Lower lobe of right lung (tissue), 2 donors: ENCODE measurements at regions of chr18 and their contacts with region 1.

Region 1: GRCh38 chr18:34364699-34365098 is 140.0 kb upstream of the NOL4 start:
- DNase-seq: no peak
- ATAC-seq: no peak
- H3K4me3 ChIP-seq: no peak overlapping the region
- H3K27ac ChIP-seq: no peak overlapping the region
- H3K4me1 ChIP-seq: no peaks in the 10 kb centered on the region
- H3K27me3 ChIP-seq: no peaks in the 10 kb centered on the region
- CTCF ChIP-seq: no peak

Region 2: DNA sequence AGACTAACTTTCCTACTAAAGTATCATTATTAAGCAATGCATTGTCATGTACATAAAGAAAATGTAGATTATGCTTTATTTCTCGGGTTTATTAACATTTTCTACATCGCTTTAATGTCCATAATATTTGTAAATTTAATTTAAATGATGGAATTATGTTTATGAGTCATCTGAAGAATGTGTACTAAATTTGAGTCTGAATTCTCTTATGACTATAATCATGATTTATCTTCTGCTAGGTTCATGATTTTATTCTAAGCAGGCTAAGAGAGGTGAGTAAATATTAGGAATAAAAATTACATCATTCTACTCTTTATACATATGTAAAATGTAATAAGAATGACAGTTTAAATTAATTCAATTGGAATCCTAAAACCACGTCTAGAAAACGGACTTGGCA is 66.3 kb after region 1 on chr18:
- intact Hi-C with region 1: loop called (anchors 10 kb)
- DNase-seq: no peak
- ATAC-seq: no peak
- H3K4me3 ChIP-seq: no peak overlapping the region
- H3K27ac ChIP-seq: no peak overlapping the region
- H3K4me1 ChIP-seq: no peaks in the 10 kb centered on the region
- H3K27me3 ChIP-seq: no peaks in the 10 kb centered on the region
- CTCF ChIP-seq: no peak